MCF 10A (cell line): ENCODE measurements at regions of chr9 and their contacts with region 1.

Region 1: GRCh38 chr9:125746017-125746773 is 978 bp upstream of the PBX3 start:
- DNase-seq: peak; percentile 97
- H3K4me3 Mint-ChIP-seq: peak overlapping the region; percentile 84
- H3K27ac Mint-ChIP-seq: peak overlapping the region; percentile 36
- H3K4me1 Mint-ChIP-seq: peaks cover 24% of the 10 kb centered on the region
- H3K27me3 Mint-ChIP-seq: no peaks in the 10 kb centered on the region
- CTCF ChIP-seq: no peak

Region 2: GRCh38 chr9:125407974-125408900 is 338.0 kb before region 1 on chr9:
- CTCF ChIA-PET with region 1: interaction called, 5 read pairs
- POLR2A ChIA-PET with region 1: no interaction called
- intact Hi-C with region 1: loop called (anchors 2 kb)
- DNase-seq: peak; percentile 73
- H3K4me3 Mint-ChIP-seq: peak overlapping the region; percentile 57
- H3K27ac Mint-ChIP-seq: no peak overlapping the region
- H3K4me1 Mint-ChIP-seq: peaks cover 9% of the 10 kb centered on the region
- H3K27me3 Mint-ChIP-seq: peaks cover 14% of the 10 kb centered on the region
- CTCF ChIP-seq: peak; percentile 95

Region 3: DNA sequence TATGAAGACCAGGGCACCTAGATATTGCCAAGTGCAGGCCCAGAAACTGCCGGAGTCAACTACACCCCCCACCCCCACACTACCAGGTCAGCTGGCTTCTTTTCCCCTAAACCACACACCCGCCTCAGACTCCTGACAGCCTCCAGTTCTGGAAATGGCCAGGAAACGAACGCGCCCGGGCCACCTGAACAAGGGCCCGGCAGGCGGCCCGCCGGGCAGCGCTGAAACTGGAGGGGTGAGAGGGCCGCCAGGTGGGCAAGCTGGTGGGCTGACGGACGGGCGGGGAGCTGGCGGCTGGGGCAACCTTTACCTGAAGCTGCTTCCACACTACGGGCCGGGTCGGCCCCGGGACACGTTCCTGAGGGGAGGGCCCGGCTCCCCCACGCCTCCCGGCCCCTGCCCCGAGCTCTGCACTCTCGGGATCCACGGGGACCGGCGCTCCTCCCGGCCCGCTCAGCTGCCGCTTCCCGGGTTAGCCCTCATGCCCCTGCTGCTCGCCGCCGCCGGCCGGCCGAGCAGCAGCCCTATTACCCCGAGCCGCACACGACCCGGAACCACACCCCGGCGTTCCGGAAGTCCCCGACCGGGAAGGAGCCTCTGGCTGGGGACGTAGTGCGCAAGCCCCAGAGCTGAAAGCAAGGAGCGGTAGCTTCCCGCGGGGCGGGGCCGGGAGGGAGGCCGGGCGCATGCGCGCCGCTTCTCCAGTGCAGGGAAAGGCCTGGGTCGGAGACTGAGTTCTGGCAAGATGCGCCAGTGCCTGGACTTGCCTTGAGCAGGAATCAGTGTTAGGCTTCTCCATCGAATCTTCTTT is 39.3 kb before region 1 on chr9 and contains the start of gene MAPKAP1:
- CTCF ChIA-PET with region 1: no interaction called
- POLR2A ChIA-PET with region 1: interaction called, 31 read pairs
- intact Hi-C with region 1: loop called (anchors 5 kb)
- DNase-seq: peak; percentile 96
- H3K4me3 Mint-ChIP-seq: peak within 1 kb of the TSS; percentile 82
- H3K27ac Mint-ChIP-seq: peak within 1 kb of the TSS; percentile 83
- H3K4me1 Mint-ChIP-seq: peaks cover 24% of the 10 kb centered on the region
- H3K27me3 Mint-ChIP-seq: no peaks in the 10 kb centered on the region
- CTCF ChIP-seq: no peak
- total RNA-seq, gene MAPKAP1: 74.9 and 111 TPM in 2 replicates

Region 4: DNA sequence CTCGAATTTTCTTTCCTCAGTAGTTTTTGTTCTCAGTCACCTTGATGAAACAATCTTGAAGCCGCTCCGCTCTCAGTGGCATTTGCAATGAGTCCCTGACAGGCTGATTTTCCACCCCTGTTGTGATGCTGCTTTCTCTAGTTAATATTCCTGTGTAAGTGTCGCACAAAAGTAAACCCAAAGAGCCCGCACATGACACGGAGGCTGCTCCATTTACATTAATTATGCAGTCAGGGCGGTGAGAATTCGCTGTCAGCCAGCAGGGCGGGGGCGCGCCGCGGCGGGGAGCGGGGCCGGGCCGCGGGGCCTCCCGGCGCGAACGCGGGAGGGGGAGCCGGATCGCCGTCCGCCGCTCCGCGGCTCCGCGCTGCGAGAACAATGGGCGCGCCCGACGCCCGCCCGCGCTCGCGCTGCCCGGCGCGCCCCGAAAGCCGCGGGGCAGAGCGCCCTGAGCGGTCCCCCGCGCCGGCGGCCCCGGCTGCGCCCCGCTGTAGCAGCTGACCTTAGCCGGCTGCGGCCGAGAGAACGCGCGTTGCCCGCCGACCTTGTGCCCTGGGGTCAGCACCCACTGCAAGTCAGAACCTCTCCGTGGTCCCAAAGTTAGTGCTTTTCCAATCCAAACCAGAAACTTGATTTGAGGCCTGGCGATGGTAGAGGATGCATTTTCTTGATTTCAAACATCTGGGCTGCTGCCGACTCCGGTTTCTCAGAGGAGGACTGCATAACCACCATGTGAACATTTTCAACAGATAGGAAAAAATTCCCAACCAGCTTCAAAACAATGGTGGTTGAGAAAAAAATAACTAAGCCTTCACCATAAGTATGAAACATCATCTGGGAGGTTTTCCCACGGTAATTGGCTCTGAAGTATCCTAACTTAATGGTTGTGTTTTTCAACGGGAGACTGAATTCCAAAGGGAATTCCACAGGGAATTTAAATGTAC is 143.6 kb after region 1 on chr9:
- CTCF ChIA-PET with region 1: no interaction called
- POLR2A ChIA-PET with region 1: interaction called, 5 read pairs
- intact Hi-C with region 1: loop called (anchors 5 kb)
- DNase-seq: peak; percentile 21
- H3K4me3 Mint-ChIP-seq: peak overlapping the region; percentile 72
- H3K27ac Mint-ChIP-seq: no peak overlapping the region
- H3K4me1 Mint-ChIP-seq: peaks cover 6% of the 10 kb centered on the region
- H3K27me3 Mint-ChIP-seq: no peaks in the 10 kb centered on the region
- CTCF ChIP-seq: no peak

Region 5: GRCh38 chr9:126228781-126229444 is 482.7 kb after region 1 on chr9:
- CTCF ChIA-PET with region 1: no interaction called
- POLR2A ChIA-PET with region 1: no interaction called
- intact Hi-C with region 1: loop called (anchors 2 kb)
- DNase-seq: peak; percentile 70
- H3K4me3 Mint-ChIP-seq: no peak overlapping the region
- H3K27ac Mint-ChIP-seq: no peak overlapping the region
- H3K4me1 Mint-ChIP-seq: no peaks in the 10 kb centered on the region
- H3K27me3 Mint-ChIP-seq: peaks cover 52% of the 10 kb centered on the region
- CTCF ChIP-seq: peak; percentile 98

Region 6: DNA sequence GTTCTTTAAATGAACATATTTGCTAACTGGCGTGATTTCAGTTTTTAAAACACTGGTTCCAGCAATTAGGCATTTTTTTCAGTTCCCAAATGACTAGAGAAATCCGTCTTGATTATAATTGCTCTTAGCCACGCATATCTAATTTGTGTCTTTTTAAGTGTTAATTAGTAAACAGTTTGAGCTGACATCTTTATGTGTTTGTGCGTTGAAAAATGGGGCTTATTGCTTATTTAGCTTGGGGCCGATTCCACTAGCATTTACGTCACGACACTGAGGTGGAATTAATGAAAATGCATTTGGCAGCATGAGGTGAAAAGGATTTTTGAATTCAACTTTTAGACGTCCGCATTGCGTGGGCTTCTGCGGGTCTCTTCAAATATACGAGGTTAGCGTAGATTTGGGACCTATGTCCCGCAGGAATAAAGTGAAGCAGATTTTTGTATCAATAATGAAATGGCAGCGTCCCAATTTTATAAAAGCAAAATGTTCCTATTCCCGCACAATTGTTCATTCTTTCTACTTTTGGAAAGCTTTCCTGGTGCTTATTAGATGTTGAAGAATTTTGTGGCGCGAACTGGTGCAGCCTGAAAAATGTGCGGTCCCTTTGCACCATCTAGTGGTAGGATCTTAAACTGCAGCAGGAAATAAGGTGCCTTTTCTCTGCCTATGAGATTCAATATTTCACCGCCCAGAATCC is 744.8 kb after region 1 on chr9:
- CTCF ChIA-PET with region 1: no interaction called
- POLR2A ChIA-PET with region 1: no interaction called
- intact Hi-C with region 1: loop called (anchors 10 kb)
- DNase-seq: peak; percentile 66
- H3K4me3 Mint-ChIP-seq: no peak overlapping the region
- H3K27ac Mint-ChIP-seq: no peak overlapping the region
- H3K4me1 Mint-ChIP-seq: no peaks in the 10 kb centered on the region
- H3K27me3 Mint-ChIP-seq: no peaks in the 10 kb centered on the region
- CTCF ChIP-seq: peak; percentile 92